ENCODE measurements at regions of chr9 and their contacts with region 1.

Region 1: GRCh38 chr9:72356041-72356582 is 8.9 kb downstream of the ZFAND5 start:
- DNase-seq: no peak
- ATAC-seq: peak in 1 of 2 donors; percentile 12
- H3K4me3 ChIP-seq: peak overlapping the region in 1 of 4 donors; percentile 93
- H3K27ac ChIP-seq: peak overlapping the region; percentile 94 to 99 (median 98)
- H3K4me1 ChIP-seq: peaks cover 53 to 93% of the 10 kb centered on the region in 2 donors
- H3K27me3 ChIP-seq: no peaks in the 10 kb centered on the region
- CTCF ChIP-seq: no peak
- POLR2A ChIP-seq: no peak

Region 2: GRCh38 chr9:72251589-72251988 is 104.5 kb before region 1 on chr9:
- in situ Hi-C with region 1: no loop called
- intact Hi-C with region 1: no loop called
- DNase-seq: no peak
- ATAC-seq: no peak
- H3K4me3 ChIP-seq: no peak overlapping the region
- H3K27ac ChIP-seq: no peak overlapping the region
- H3K4me1 ChIP-seq: no peaks in the 10 kb centered on the region
- H3K27me3 ChIP-seq: no peaks in the 10 kb centered on the region
- CTCF ChIP-seq: no peak
- POLR2A ChIP-seq: no peak

Region 3: GRCh38 chr9:72315510-72316311 is 40.4 kb before region 1 on chr9:
- in situ Hi-C with region 1: no loop called
- intact Hi-C with region 1: loop called (anchors 2 kb)
- DNase-seq: peak; percentile 88 to 90
- ATAC-seq: peak; percentile 84 to 92
- H3K4me3 ChIP-seq: peak overlapping the region; percentile 24 to 55 (median 31)
- H3K27ac ChIP-seq: peak overlapping the region; percentile 88 to 89 (median 88)
- H3K4me1 ChIP-seq: peaks cover 25 to 35% of the 10 kb centered on the region in 2 donors
- H3K27me3 ChIP-seq: no peaks in the 10 kb centered on the region
- CTCF ChIP-seq: no peak
- POLR2A ChIP-seq: peak in 1 of 2 donors; percentile 34

Region 4: GRCh38 chr9:72338631-72339030 is 17.5 kb before region 1 on chr9:
- in situ Hi-C with region 1: no loop called
- intact Hi-C with region 1: loop called (anchors 1 kb)
- DNase-seq: no peak
- ATAC-seq: no peak
- H3K4me3 ChIP-seq: no peak overlapping the region
- H3K27ac ChIP-seq: no peak overlapping the region
- H3K4me1 ChIP-seq: no peaks in the 10 kb centered on the region
- H3K27me3 ChIP-seq: no peaks in the 10 kb centered on the region
- CTCF ChIP-seq: no peak
- POLR2A ChIP-seq: no peak